ENCODE measurements at regions of chr17 and their contacts with region 1.

Region 1: GRCh38 chr17:56737366-56738161 is 96.2 kb downstream of the C17orf67 start:
- ATAC-seq: peak in 3 of 8 experiments; percentile 92 to 98 (median 94)
- H3K4me3 ChIP-seq: no peak overlapping the region
- H3K27ac ChIP-seq: no peak overlapping the region
- H3K4me1 ChIP-seq: peaks cover 18 to 28% of the 10 kb centered on the region in 2 donors

Region 2: GRCh38 chr17:56629531-56630075 is 108.0 kb before region 1 on chr17:
- in situ Hi-C with region 1: loop called in 1 of 9 experiments (anchors 25 kb)
- ATAC-seq: peak; percentile 55 to 99 (median 76)
- H3K4me3 ChIP-seq: no peak overlapping the region
- H3K27ac ChIP-seq: no peak overlapping the region
- H3K4me1 ChIP-seq: no peaks in the 10 kb centered on the region